ENCODE measurements at regions of chr16 and their contacts with region 1.

Region 1: GRCh38 chr16:10964039-10964890 is 19.9 kb downstream of the CLEC16A start:
- DNase-seq: peak; percentile 93
- H3K4me3 Mint-ChIP-seq: peak overlapping the region; percentile 60
- H3K27ac Mint-ChIP-seq: peak overlapping the region; percentile 98
- H3K4me1 Mint-ChIP-seq: peaks cover 77% of the 10 kb centered on the region
- H3K27me3 Mint-ChIP-seq: no peaks in the 10 kb centered on the region

Region 2: DNA sequence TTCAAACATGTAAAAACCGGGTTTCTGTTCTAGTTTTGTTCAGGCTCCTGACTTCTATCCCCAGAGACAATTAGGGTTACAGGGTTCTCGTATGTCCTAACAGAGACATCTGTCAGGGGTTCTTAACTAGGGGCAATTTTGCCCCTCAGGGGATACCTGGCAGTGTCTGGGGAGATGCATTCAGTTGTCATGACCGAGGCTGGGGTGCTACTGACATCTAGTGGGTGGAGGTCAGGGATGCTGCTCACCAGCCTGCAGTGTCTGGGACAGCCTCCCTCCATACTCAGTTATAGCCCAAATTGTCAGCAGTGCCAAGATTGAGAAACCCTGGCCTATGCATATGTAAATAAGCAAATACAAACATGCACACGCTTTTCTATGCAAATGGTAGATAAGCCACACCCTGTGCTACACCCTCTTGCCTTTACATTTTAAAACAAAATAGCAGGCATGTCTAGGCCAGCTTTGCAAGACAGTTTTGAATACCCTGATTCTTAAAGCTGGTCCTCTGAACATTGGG is 17.5 kb after region 1 on chr16:
- CTCF ChIA-PET with region 1: interaction called, 45 read pairs
- POLR2A ChIA-PET with region 1: interaction called, 31 read pairs
- intact Hi-C with region 1: loop called (anchors 1 kb)
- DNase-seq: peak; percentile 79
- H3K4me3 Mint-ChIP-seq: peak overlapping the region; percentile 71
- H3K27ac Mint-ChIP-seq: peak overlapping the region; percentile 87
- H3K4me1 Mint-ChIP-seq: peaks cover 48% of the 10 kb centered on the region
- H3K27me3 Mint-ChIP-seq: no peaks in the 10 kb centered on the region

Region 3: GRCh38 chr16:11094072-11094856 is 130.0 kb after region 1 on chr16:
- CTCF ChIA-PET with region 1: interaction called, 23 read pairs
- POLR2A ChIA-PET with region 1: interaction called, 29 read pairs
- intact Hi-C with region 1: loop called (anchors 1 kb)
- DNase-seq: peak; percentile 87
- H3K4me3 Mint-ChIP-seq: peak overlapping the region; percentile 49
- H3K27ac Mint-ChIP-seq: peak overlapping the region; percentile 98
- H3K4me1 Mint-ChIP-seq: peaks cover 82% of the 10 kb centered on the region
- H3K27me3 Mint-ChIP-seq: no peaks in the 10 kb centered on the region

Region 4: DNA sequence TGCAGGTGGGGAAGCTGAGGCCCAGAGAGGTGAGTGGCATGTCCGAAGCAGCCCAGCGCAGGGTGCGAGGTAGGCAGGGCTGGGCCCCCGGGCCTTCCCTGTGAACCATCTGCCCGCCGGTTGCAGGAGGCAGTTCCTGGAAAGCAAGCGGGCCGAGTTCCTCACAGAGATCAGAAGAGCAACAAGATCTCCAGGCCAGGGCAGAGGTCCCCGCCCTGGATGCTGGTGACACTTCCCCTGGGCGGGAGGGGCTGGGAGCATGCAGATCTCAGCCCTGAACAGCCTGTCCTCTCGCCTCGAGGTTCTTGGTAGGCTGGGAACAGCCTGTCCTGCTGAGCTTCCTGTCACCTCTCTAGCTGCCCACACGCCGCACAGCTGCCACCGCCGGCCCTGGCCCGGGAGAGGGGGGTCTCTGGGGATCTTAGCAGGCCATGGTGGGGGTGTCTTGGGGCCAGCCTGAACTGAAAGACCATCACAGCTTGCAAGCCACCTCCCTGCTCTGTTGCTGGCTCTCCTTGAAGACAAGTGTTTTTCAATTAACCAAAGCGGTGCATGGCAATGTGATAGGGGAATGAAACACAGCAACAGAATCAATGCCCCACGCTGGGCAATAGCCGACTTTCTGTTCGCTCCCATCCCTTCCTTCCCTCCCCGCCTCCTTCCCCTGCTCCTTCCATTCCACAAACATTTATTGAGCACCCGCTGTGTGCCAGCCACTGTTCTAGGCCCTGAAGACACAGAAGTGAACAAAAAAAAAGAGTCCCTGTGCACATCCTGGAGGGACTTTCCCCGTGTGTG is 260.0 kb after region 1 on chr16:
- CTCF ChIA-PET with region 1: interaction called, 19 read pairs
- POLR2A ChIA-PET with region 1: interaction called, 34 read pairs
- intact Hi-C with region 1: loop called (anchors 1 kb)
- DNase-seq: peak; percentile 88
- H3K4me3 Mint-ChIP-seq: peak overlapping the region; percentile 71
- H3K27ac Mint-ChIP-seq: peak overlapping the region; percentile 99
- H3K4me1 Mint-ChIP-seq: peaks cover 56% of the 10 kb centered on the region
- H3K27me3 Mint-ChIP-seq: no peaks in the 10 kb centered on the region

Region 5: DNA sequence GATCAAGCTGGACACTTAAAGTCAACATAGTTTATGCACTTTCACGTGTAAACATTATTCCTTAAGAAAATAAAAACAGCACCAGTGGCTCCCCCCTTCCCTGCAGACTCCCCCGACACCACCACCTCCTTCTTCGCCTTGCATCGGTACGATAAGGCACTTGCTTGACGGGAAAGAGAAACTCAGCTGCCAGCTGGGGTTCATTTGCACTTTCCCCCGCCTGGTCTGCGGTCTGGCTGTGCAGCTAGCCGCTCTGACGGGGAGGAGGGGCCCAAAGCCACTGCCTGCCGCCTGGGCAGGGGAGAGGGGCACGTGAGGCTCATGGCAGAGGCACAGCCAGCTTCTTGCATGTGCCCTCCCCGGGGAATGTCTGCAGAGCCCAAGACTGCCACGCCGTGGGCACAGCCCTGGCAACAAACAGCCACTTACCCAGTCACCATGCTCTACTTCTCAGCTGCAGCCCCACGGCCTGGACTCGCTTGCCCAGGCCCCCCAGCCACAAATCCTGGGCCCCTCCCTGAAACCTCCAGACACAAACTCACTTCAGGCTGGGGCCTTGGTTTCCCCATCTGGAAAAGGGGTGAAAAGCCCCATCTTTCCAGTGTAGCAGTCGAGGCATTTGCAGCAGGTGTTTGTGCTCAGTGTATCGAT is 333.4 kb after region 1 on chr16:
- CTCF ChIA-PET with region 1: interaction called, 11 read pairs
- POLR2A ChIA-PET with region 1: no interaction called
- intact Hi-C with region 1: no loop called
- DNase-seq: peak; percentile 82
- H3K4me3 Mint-ChIP-seq: peak overlapping the region; percentile 49
- H3K27ac Mint-ChIP-seq: peak overlapping the region; percentile 49
- H3K4me1 Mint-ChIP-seq: peaks cover 18% of the 10 kb centered on the region
- H3K27me3 Mint-ChIP-seq: peaks cover 6% of the 10 kb centered on the region

Region 6: GRCh38 chr16:11407047-11407982 is 443.1 kb after region 1 on chr16:
- CTCF ChIA-PET with region 1: interaction called, 48 read pairs
- POLR2A ChIA-PET with region 1: no interaction called
- intact Hi-C with region 1: loop called (anchors 1 kb)
- DNase-seq: peak; percentile 75
- H3K4me3 Mint-ChIP-seq: no peak overlapping the region
- H3K27ac Mint-ChIP-seq: no peak overlapping the region
- H3K4me1 Mint-ChIP-seq: no peaks in the 10 kb centered on the region
- H3K27me3 Mint-ChIP-seq: no peaks in the 10 kb centered on the region

Region 7: DNA sequence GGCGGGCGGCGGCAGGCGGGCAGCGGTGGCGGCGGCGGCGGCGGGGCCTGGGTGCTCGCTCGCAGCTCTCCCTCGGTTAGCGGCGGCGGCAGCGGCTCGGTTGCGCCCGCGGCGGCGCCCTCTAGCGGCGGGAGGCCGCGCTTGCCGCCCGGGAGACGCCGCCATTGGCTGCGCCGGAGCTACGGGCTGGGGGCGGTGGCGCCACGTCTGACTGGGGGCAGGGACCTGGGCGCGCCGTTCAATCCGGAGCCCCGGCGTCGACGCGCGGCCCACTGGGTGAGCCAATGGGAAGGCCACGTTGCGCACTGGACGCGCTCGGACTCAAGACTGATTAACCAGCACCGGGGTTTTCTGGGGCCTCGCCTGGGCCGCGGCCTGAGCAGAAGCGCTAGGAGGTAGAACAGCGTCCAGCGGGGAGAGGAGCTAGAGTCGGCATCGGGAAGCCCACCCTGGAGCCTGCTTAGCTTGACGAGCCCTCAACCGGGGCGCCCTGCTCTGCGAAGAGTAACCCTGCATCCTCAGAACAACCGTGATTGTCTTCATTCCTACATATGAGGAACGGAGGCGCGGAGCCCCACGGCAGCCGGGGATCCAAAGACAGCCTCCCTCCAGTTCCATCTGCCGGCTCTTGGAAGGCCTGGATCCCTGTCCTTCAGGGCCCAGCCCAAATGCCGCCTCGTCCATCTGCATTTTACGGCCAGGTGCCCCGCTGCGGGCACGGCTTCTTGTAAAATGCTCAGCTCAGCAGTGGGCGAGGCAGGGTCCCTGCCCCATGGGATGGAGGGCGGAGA is 833.1 kb after region 1 on chr16 and contains the start of gene ZC3H7A:
- CTCF ChIA-PET with region 1: no interaction called
- POLR2A ChIA-PET with region 1: no interaction called
- intact Hi-C with region 1: loop called (anchors 5 kb)
- DNase-seq: peak; percentile 96
- H3K4me3 Mint-ChIP-seq: peak within 1 kb of the TSS; percentile 87
- H3K27ac Mint-ChIP-seq: peak within 1 kb of the TSS; percentile 91
- H3K4me1 Mint-ChIP-seq: peaks cover 64% of the 10 kb centered on the region
- H3K27me3 Mint-ChIP-seq: no peaks in the 10 kb centered on the region
- total RNA-seq, gene ZC3H7A: 65.1 to 75.5 TPM